GM12878 (cell line): ENCODE measurements at regions of chr3 and their contacts with region 1.

Region 1: GRCh38 chr3:81910244-81910852 is 148.9 kb upstream of the GBE1 start:
- DNase-seq: peak; percentile 21
- ATAC-seq: peak; percentile 87
- H3K4me3 ChIP-seq: no peak overlapping the region
- H3K27ac ChIP-seq: no peak overlapping the region
- H3K4me1 ChIP-seq: no peaks in the 10 kb centered on the region
- H3K27me3 ChIP-seq: no peaks in the 10 kb centered on the region
- CTCF ChIP-seq: peak; percentile 58 to 71 (median 65)
- EP300 ChIP-seq: no peak
- POLR2A ChIP-seq: no peak
- RAD21 ChIP-seq: peak; percentile 41

Region 2: GRCh38 chr3:81666493-81667121 is 243.7 kb before region 1 on chr3:
- CTCF ChIA-PET with region 1: interaction called, 12 read pairs
- POLR2A ChIA-PET with region 1: no interaction called
- RAD21 ChIA-PET with region 1: interaction called, 9 read pairs
- SMC1A ChIA-PET with region 1: interaction called, 23 read pairs
- in situ Hi-C with region 1: no loop called
- intact Hi-C with region 1: loop called (anchors 1 kb)
- DNase-seq: no peak
- ATAC-seq: peak; percentile 51; the same call in 2 of the 3 replicates
- H3K4me3 ChIP-seq: no peak overlapping the region
- H3K27ac ChIP-seq: no peak overlapping the region
- H3K4me1 ChIP-seq: no peaks in the 10 kb centered on the region
- H3K27me3 ChIP-seq: no peaks in the 10 kb centered on the region
- CTCF ChIP-seq: peak; percentile 52 to 72 (median 70); a peak in 5 of 6 replicates
- EP300 ChIP-seq: no peak
- POLR2A ChIP-seq: no peak
- RAD21 ChIP-seq: peak; percentile 75

Region 3: GRCh38 chr3:81871358-81872155 is 38.8 kb before region 1 on chr3:
- CTCF ChIA-PET with region 1: interaction called, 10 read pairs
- POLR2A ChIA-PET with region 1: no interaction called
- RAD21 ChIA-PET with region 1: no interaction called
- SMC1A ChIA-PET with region 1: interaction called, 4 read pairs
- in situ Hi-C with region 1: no loop called
- intact Hi-C with region 1: no loop called
- DNase-seq: no peak
- ATAC-seq: no peak
- H3K4me3 ChIP-seq: no peak overlapping the region
- H3K27ac ChIP-seq: no peak overlapping the region
- H3K4me1 ChIP-seq: no peaks in the 10 kb centered on the region
- H3K27me3 ChIP-seq: no peaks in the 10 kb centered on the region
- CTCF ChIP-seq: peak in 1 of 3 experiments; percentile 6; a peak in 1 of 6 replicates
- EP300 ChIP-seq: no peak
- POLR2A ChIP-seq: no peak
- RAD21 ChIP-seq: peak; percentile 67

Region 4: GRCh38 chr3:81920816-81921215 is 10.5 kb after region 1 on chr3:
- CTCF ChIA-PET with region 1: interaction called, 57 read pairs
- POLR2A ChIA-PET with region 1: no interaction called
- RAD21 ChIA-PET with region 1: interaction called, 3 read pairs
- SMC1A ChIA-PET with region 1: interaction called, 22 read pairs
- in situ Hi-C with region 1: no loop called
- intact Hi-C with region 1: no loop called
- DNase-seq: no peak
- ATAC-seq: no peak
- H3K4me3 ChIP-seq: no peak overlapping the region
- H3K27ac ChIP-seq: no peak overlapping the region
- H3K4me1 ChIP-seq: no peaks in the 10 kb centered on the region
- H3K27me3 ChIP-seq: no peaks in the 10 kb centered on the region
- CTCF ChIP-seq: no peak
- EP300 ChIP-seq: no peak
- POLR2A ChIP-seq: no peak
- RAD21 ChIP-seq: no peak

Region 5: DNA sequence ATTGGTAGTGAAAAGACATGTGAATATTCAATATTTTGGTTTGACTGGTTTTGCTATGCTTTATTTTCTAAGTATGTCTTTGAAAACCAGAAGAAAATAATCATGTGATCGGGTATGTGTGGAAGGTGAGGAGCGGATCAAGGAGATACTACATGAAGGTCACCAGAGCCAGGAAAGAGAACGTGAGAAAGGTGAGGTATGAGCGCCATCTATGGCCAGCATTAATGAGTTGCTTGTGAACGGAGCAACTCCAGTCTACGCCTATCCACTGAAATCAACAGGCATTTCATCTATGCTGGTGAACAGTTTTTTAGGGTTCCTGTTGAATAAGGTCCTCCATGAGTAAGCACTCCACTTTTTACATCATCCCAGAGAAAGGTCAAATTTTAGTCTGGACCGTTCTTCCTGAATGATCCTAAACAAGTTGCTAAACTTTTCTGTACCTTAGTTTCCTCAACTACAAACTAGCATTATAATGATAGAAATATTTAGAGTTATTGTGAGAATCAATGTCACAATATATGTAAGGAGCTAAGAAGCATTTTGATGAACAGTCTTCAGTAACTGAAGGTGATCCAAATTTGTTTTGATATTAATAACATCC is 1613.2 kb after region 1 on chr3:
- CTCF ChIA-PET with region 1: no interaction called
- POLR2A ChIA-PET with region 1: no interaction called
- RAD21 ChIA-PET with region 1: no interaction called
- SMC1A ChIA-PET with region 1: no interaction called
- in situ Hi-C with region 1: no loop called
- intact Hi-C with region 1: loop called (anchors 10 kb)
- DNase-seq: peak; percentile 11
- ATAC-seq: peak; percentile 98
- H3K4me3 ChIP-seq: no peak overlapping the region
- H3K27ac ChIP-seq: no peak overlapping the region
- H3K4me1 ChIP-seq: no peaks in the 10 kb centered on the region
- H3K27me3 ChIP-seq: no peaks in the 10 kb centered on the region
- CTCF ChIP-seq: peak; percentile 56 to 78 (median 65)
- EP300 ChIP-seq: no peak
- POLR2A ChIP-seq: no peak
- RAD21 ChIP-seq: peak; percentile 79